ENCODE measurements at regions of chr3 and their contacts with region 1.

Region 1: GRCh38 chr3:72523429-72524151 is 324.7 kb downstream of the SHQ1 start:
- DNase-seq: no peak
- H3K4me3 Mint-ChIP-seq: no peak overlapping the region
- H3K27ac Mint-ChIP-seq: no peak overlapping the region
- H3K4me1 Mint-ChIP-seq: peaks cover 44% of the 10 kb centered on the region
- H3K27me3 Mint-ChIP-seq: peaks cover 3% of the 10 kb centered on the region

Region 2: GRCh38 chr3:71984843-71985613 is 538.6 kb before region 1 on chr3:
- CTCF ChIA-PET with region 1: no interaction called
- POLR2A ChIA-PET with region 1: no interaction called
- intact Hi-C with region 1: loop called (anchors 1 kb)
- DNase-seq: peak; percentile 70
- H3K4me3 Mint-ChIP-seq: peak overlapping the region; percentile 13
- H3K27ac Mint-ChIP-seq: peak overlapping the region; percentile 83
- H3K4me1 Mint-ChIP-seq: peaks cover 42% of the 10 kb centered on the region
- H3K27me3 Mint-ChIP-seq: peaks cover 9% of the 10 kb centered on the region

Region 3: GRCh38 chr3:72375237-72376076 is 148.1 kb before region 1 on chr3:
- CTCF ChIA-PET with region 1: no interaction called
- POLR2A ChIA-PET with region 1: no interaction called
- intact Hi-C with region 1: loop called (anchors 1 kb)
- DNase-seq: peak; percentile 70
- H3K4me3 Mint-ChIP-seq: peak overlapping the region; percentile 6
- H3K27ac Mint-ChIP-seq: peak overlapping the region; percentile 86
- H3K4me1 Mint-ChIP-seq: peaks cover 65% of the 10 kb centered on the region
- H3K27me3 Mint-ChIP-seq: no peaks in the 10 kb centered on the region

Region 4: DNA sequence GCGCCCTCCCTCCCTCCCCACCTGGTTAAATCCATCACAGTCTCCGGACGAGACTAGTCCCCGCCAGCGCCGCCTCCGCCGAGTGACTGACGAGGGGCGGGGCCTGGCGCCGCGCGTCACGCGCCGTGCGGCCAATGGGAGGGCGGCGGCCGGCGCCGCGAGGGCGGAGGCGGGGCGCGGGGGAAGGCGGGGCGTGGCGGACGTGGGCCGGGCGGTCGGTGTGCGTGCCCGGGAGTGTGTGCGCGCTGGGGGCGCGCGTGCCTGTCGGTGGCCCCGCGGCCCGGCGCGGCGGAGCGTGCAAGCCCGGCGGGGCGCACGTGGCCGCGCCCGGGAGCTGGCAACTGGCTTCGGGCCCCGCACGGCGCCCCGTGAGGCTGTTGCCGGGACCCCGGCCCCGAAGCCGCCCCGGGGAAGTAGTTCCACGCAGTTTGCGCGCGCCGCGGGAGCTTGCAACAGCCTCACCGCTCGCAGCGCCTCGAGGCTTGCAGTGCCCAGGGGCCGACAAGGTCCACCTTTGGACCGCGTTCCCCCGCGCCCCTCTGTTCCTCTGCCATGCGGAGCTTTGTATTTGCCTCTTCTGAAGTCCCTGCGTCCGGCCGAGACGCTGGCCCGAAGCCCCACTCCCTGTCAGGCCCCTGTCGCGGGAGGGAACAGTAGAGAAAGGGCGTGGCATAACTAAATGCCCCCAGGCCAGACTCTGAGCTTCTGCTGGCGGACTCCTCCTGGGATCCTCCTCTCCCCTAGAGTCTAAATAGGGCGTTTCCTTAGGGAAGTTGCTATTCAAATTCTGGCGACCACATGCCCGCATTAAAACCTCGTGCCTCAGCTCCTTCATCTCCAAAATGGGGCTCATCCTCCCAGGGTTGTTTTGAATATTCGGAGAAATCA is 76.3 kb before region 1 on chr3:
- CTCF ChIA-PET with region 1: no interaction called
- POLR2A ChIA-PET with region 1: interaction called, 6 read pairs
- intact Hi-C with region 1: loop called (anchors 1 kb)
- DNase-seq: peak; percentile 93
- H3K4me3 Mint-ChIP-seq: peak overlapping the region; percentile 61
- H3K27ac Mint-ChIP-seq: no peak overlapping the region
- H3K4me1 Mint-ChIP-seq: peaks cover 34% of the 10 kb centered on the region
- H3K27me3 Mint-ChIP-seq: peaks cover 23% of the 10 kb centered on the region

Region 5: GRCh38 chr3:72538070-72538745 is 14.6 kb after region 1 on chr3:
- CTCF ChIA-PET with region 1: interaction called, 3 read pairs
- POLR2A ChIA-PET with region 1: no interaction called
- intact Hi-C with region 1: loop called (anchors 1 kb)
- DNase-seq: peak; percentile 40
- H3K4me3 Mint-ChIP-seq: no peak overlapping the region
- H3K27ac Mint-ChIP-seq: no peak overlapping the region
- H3K4me1 Mint-ChIP-seq: peaks cover 21% of the 10 kb centered on the region
- H3K27me3 Mint-ChIP-seq: peaks cover 7% of the 10 kb centered on the region

Region 6: GRCh38 chr3:72560846-72561675 is 37.5 kb after region 1 on chr3:
- CTCF ChIA-PET with region 1: no interaction called
- POLR2A ChIA-PET with region 1: no interaction called
- intact Hi-C with region 1: no loop called
- DNase-seq: no peak
- H3K4me3 Mint-ChIP-seq: no peak overlapping the region
- H3K27ac Mint-ChIP-seq: no peak overlapping the region
- H3K4me1 Mint-ChIP-seq: peaks cover 3% of the 10 kb centered on the region
- H3K27me3 Mint-ChIP-seq: no peaks in the 10 kb centered on the region

Region 7: GRCh38 chr3:72977060-72977808 is 453.6 kb after region 1 on chr3:
- CTCF ChIA-PET with region 1: no interaction called
- POLR2A ChIA-PET with region 1: no interaction called
- intact Hi-C with region 1: loop called (anchors 2 kb)
- DNase-seq: peak; percentile 57
- H3K4me3 Mint-ChIP-seq: peak overlapping the region; percentile 20
- H3K27ac Mint-ChIP-seq: peak overlapping the region; percentile 83
- H3K4me1 Mint-ChIP-seq: peaks cover 28% of the 10 kb centered on the region
- H3K27me3 Mint-ChIP-seq: peaks cover 2% of the 10 kb centered on the region